K562 (cell line): ENCODE measurements at regions of chr6 and their contacts with region 1.

Region 1: GRCh38 chr6:29847871-29848630 is 20.4 kb downstream of the HLA-G start:
- DNase-seq: peak; percentile 70 to 83 (median 76)
- ATAC-seq: peak; percentile 97
- H3K4me3 ChIP-seq: no peak overlapping the region
- H3K27ac ChIP-seq: no peak overlapping the region
- H3K4me1 ChIP-seq: peaks cover 0 to 6% of the 10 kb centered on the region in 2 experiments; a peak in 2 of 5 replicates
- H3K27me3 ChIP-seq: peaks cover 2 to 21% of the 10 kb centered on the region in 2 experiments; a peak in 3 of 5 replicates
- CTCF ChIP-seq: peak; percentile 92 to 96 (median 95)
- EP300 ChIP-seq: no peak
- POLR2A ChIP-seq: no peak
- RAD21 ChIP-seq: peak; percentile 98 to 99

Region 2: DNA sequence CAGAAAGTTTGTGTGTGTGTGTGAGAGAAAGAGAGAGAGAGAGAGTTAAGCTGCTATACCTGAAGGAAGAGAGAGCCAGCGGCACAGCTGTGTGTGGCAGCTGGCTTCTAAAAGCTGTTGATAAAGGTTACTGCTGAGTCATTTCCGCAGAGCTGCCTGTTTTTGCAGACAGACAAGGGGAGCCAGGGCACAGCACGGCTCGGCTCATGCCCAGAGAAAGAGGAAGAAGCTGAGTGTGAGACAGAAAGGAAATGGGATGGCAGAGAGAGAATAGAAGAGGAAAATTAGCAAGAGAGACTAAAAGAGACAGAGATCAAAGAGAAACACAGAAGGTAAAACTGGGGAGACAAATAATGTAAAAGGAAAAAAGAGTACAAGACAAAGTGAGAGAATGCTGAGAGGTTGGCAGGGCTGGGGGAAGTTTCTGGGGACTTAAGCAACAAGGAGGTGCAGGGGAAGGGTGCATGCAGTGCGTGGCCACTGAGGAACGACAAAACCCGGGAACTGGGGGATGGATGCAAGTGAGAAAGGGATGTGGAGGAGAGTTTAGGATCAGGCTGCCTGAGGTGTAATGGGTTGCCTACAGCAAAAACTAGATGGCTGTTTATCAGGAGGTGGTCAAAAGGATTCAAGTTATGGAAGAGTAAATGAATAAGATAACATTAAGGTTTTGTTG is 117.0 kb after region 1 on chr6:
- CTCF ChIA-PET with region 1: no interaction called
- POLR2A ChIA-PET with region 1: no interaction called
- in situ Hi-C with region 1: no loop called
- intact Hi-C with region 1: loop called (anchors 5 kb)
- DNase-seq: peak; percentile 76 to 98 (median 83)
- ATAC-seq: peak; percentile 87
- H3K4me3 ChIP-seq: peak overlapping the region; percentile 55
- H3K27ac ChIP-seq: peak overlapping the region; percentile 95
- H3K4me1 ChIP-seq: peaks cover 10 to 29% of the 10 kb centered on the region in 2 experiments
- H3K27me3 ChIP-seq: no peaks in the 10 kb centered on the region
- CTCF ChIP-seq: no peak
- EP300 ChIP-seq: peak; percentile 95
- POLR2A ChIP-seq: peak; percentile 97
- RAD21 ChIP-seq: peak in 1 of 2 experiments; percentile 33; a peak in 1 of 4 replicates

Region 3: DNA sequence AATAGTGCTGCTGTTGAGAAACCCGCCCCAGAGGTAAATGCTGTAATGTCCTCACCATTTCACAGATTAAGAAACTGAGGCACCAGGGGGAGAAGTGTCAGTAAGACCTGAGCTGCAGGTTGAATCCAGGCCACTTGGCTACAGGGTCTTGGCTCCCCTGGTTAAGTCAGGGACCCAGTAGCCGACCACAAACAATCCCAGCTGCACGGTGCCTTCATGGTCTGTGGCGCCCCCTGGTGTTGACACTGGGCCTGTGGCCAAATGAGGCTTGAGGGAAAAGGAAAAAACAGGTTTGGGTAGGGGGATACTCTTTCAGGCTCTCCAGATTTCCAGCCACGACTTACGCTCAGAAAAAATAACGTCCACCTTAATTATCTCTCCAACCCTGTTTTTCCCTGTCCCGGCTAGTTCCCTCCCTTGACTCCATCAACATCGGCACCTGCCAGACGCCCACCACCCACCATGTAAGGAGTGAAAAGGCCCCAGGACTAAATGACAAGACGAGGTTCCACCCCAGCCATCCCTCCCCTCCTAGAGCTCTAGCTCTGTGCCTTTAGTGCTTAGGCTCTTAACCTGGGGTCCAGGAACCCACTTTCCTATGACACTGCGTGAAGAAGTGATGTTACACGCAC is 165.4 kb after region 1 on chr6:
- CTCF ChIA-PET with region 1: interaction called, 75 read pairs
- POLR2A ChIA-PET with region 1: no interaction called
- in situ Hi-C with region 1: no loop called
- intact Hi-C with region 1: loop called (anchors 1 kb)
- DNase-seq: peak; percentile 32 to 64 (median 52)
- ATAC-seq: peak; percentile 89
- H3K4me3 ChIP-seq: no peak overlapping the region
- H3K27ac ChIP-seq: no peak overlapping the region
- H3K4me1 ChIP-seq: no peaks in the 10 kb centered on the region
- H3K27me3 ChIP-seq: no peaks in the 10 kb centered on the region
- CTCF ChIP-seq: peak; percentile 78 to 89 (median 83)
- EP300 ChIP-seq: no peak
- POLR2A ChIP-seq: no peak
- RAD21 ChIP-seq: peak; percentile 46 to 54

Region 4: DNA sequence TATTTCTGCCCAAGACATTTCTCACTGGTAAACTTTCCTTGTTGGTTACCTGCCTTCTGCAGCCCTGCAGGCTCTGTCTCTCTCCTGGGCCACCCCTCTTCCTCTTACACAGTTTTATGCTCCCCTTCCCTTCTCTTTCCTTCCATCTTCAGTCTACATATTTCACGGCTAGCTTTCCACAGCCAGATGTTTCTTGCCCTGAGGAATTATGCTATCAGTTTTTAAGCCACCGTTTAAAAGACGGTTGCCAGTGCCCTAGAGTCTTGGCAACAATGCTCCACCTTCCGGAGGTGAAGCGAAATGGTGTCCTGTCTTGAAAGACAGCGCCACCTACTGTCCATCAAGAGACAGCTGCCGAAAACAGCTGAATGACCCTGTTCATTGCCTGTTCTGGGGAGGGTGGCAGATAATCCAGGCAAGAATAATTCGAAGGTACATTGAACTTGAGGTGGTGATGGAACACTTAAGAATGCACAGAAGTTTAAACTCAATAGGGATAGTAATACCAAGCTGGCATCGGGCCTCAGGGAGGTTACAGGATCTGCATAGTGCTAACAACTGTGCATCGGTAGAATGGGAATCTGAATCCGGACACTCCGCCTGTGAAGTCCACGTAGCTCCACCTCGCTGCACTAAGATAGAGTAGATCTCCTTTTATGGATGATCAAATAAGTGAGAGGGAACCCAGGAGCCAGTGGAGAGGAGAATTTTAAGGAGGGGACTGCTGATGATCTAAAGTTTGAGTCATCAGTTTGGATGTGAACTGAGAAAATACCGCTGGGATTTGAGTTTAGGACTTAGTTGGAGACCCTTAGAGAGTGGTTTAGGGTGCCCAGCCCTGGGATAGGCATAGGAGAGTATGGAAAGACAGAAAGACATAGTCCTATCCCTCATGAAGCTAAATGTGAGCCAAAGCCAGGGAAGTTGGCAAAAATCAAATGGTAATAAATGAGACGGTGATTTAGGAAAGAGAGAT is 283.1 kb after region 1 on chr6:
- CTCF ChIA-PET with region 1: interaction called, 15 read pairs
- POLR2A ChIA-PET with region 1: no interaction called
- in situ Hi-C with region 1: no loop called
- intact Hi-C with region 1: loop called (anchors 2 kb)
- DNase-seq: peak; percentile 81 to 89 (median 86)
- ATAC-seq: peak; percentile 97
- H3K4me3 ChIP-seq: no peak overlapping the region
- H3K27ac ChIP-seq: no peak overlapping the region
- H3K4me1 ChIP-seq: peaks cover 4 to 8% of the 10 kb centered on the region in 2 experiments; a peak in 4 of 5 replicates
- H3K27me3 ChIP-seq: peaks cover 8 to 30% of the 10 kb centered on the region in 2 experiments; a peak in 3 of 5 replicates
- CTCF ChIP-seq: peak; percentile 100
- EP300 ChIP-seq: peak; percentile 9; the same call in 1 of the 2 replicates
- POLR2A ChIP-seq: no peak
- RAD21 ChIP-seq: peak; percentile 89 to 96